ENCODE measurements at regions of chr15 and their contacts with region 1.

Region 1: GRCh38 chr15:55649054-55649423 is 60.9 kb upstream of the PYGO1 start:
- DNase-seq: no peak
- H3K4me3 ChIP-seq: no peak overlapping the region
- H3K27ac ChIP-seq: no peak overlapping the region
- H3K4me1 ChIP-seq: no peaks in the 10 kb centered on the region
- H3K27me3 ChIP-seq: no peaks in the 10 kb centered on the region
- CTCF ChIP-seq: no peak
- POLR2A ChIP-seq: no peak

Region 2: DNA sequence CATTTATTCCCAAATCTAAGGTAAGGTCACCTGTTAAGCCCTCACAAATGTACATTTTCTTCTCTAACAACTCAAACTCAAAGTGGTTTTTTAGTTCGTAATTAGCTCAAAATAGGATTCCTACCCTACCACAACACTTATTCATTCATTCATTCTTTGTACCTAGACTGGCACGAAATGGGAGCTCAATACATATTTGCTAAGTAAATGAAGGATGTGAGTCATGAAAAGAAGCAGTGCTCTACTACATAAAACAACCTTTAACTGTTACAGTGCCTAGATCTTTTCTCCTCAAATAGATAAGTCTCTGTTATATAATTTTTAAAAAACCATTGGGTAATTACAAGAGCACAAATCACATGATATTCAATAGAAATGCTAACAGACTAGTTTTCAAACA is 465.4 kb before region 1 on chr15:
- intact Hi-C with region 1: no loop called
- DNase-seq: no peak
- H3K4me3 ChIP-seq: no peak overlapping the region
- H3K27ac ChIP-seq: no peak overlapping the region
- H3K4me1 ChIP-seq: no peaks in the 10 kb centered on the region
- H3K27me3 ChIP-seq: no peaks in the 10 kb centered on the region
- CTCF ChIP-seq: no peak
- POLR2A ChIP-seq: no peak

Region 3: GRCh38 chr15:55630858-55631257 is 18.2 kb before region 1 on chr15:
- intact Hi-C with region 1: no loop called
- DNase-seq: no peak
- H3K4me3 ChIP-seq: no peak overlapping the region
- H3K27ac ChIP-seq: no peak overlapping the region
- H3K4me1 ChIP-seq: no peaks in the 10 kb centered on the region
- H3K27me3 ChIP-seq: no peaks in the 10 kb centered on the region
- CTCF ChIP-seq: no peak
- POLR2A ChIP-seq: no peak

Region 4: GRCh38 chr15:55789066-55789660 is 140.1 kb after region 1 on chr15:
- intact Hi-C with region 1: no loop called
- DNase-seq: no peak
- H3K4me3 ChIP-seq: no peak overlapping the region
- H3K27ac ChIP-seq: no peak overlapping the region
- H3K4me1 ChIP-seq: no peaks in the 10 kb centered on the region
- H3K27me3 ChIP-seq: no peaks in the 10 kb centered on the region
- CTCF ChIP-seq: peak in 2 of 4 experiments; percentile 19 to 60
- POLR2A ChIP-seq: no peak

Region 5: GRCh38 chr15:55846116-55846707 is 197.2 kb after region 1 on chr15:
- intact Hi-C with region 1: loop called (anchors 2 kb)
- DNase-seq: peak; percentile 66
- H3K4me3 ChIP-seq: no peak overlapping the region
- H3K27ac ChIP-seq: no peak overlapping the region
- H3K4me1 ChIP-seq: no peaks in the 10 kb centered on the region
- H3K27me3 ChIP-seq: no peaks in the 10 kb centered on the region
- CTCF ChIP-seq: peak; percentile 73 to 80 (median 74)
- POLR2A ChIP-seq: no peak

Region 6: GRCh38 chr15:56052395-56053045 is 403.5 kb after region 1 on chr15:
- intact Hi-C with region 1: loop called (anchors 10 kb)
- DNase-seq: no peak
- H3K4me3 ChIP-seq: no peak overlapping the region
- H3K27ac ChIP-seq: no peak overlapping the region
- H3K4me1 ChIP-seq: no peaks in the 10 kb centered on the region
- H3K27me3 ChIP-seq: no peaks in the 10 kb centered on the region
- CTCF ChIP-seq: peak in 3 of 4 experiments; percentile 58 to 74 (median 63)
- POLR2A ChIP-seq: no peak

Measured in prostate gland (tissue), 2 donors.